Common myeloid progenitor, CD34-positive (primary cell): ENCODE measurements at regions of chr17 and their contacts with region 1.

Region 1: GRCh38 chr17:7462474-7463371 is 16.7 kb downstream of the ZBTB4 start:
- DNase-seq: no peak
- H3K4me3 ChIP-seq: no peak overlapping the region
- H3K27ac ChIP-seq: no peak overlapping the region
- H3K4me1 ChIP-seq: peaks cover 2 to 13% (median 11%) of the 10 kb centered on the region in 4 experiments
- H3K27me3 ChIP-seq: no peaks in the 10 kb centered on the region

Region 2: DNA sequence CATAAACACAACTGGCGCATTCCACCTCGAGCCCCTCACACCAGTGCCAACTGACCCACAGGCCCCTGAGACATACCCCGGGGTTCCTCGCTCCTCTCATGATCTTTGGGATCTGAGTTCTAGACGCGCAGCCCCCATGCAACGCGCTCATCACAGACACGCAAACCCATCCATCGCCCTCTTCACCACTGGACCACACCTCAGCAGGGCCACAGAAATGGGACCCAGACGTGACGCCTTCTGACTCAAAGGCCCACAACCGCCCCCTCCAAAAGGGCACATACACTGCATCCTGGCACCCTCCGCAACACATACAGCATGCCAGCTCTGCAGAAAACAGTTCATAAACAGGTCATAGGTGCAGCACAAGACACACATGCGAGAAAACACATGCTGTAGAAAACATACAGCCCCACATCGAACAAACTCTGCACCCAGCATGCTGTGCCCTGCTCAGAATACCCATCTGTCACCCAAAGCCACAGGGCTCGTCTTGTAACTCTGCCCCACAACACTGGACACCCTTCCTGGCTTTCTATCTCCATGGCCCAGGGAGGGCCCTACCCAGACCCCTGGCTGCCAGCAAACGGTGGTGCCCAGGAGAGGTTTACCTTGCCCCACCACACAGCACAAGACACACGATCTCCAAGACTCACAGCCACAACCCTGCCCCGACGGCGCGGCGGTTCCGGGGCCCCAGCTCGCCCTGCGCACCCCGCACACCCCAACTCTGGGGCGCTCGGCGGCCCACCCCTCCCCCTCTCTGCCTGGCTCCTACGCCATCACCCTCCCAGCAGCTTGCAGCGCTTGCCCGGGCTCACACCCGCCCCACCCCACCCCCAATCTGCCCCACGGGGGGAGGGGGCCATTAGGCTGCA is 15.8 kb after region 1 on chr17:
- CTCF ChIA-PET with region 1: interaction called, 20 read pairs
- POLR2A ChIA-PET with region 1: interaction called, 12 read pairs
- DNase-seq: peak; percentile 31 to 76 (median 65)
- H3K4me3 ChIP-seq: peak overlapping the region; percentile 65 to 88 (median 79)
- H3K27ac ChIP-seq: peak overlapping the region; percentile 66 to 87
- H3K4me1 ChIP-seq: peaks cover 0 to 55% (median 51%) of the 10 kb centered on the region in 4 experiments
- H3K27me3 ChIP-seq: no peaks in the 10 kb centered on the region

Region 3: DNA sequence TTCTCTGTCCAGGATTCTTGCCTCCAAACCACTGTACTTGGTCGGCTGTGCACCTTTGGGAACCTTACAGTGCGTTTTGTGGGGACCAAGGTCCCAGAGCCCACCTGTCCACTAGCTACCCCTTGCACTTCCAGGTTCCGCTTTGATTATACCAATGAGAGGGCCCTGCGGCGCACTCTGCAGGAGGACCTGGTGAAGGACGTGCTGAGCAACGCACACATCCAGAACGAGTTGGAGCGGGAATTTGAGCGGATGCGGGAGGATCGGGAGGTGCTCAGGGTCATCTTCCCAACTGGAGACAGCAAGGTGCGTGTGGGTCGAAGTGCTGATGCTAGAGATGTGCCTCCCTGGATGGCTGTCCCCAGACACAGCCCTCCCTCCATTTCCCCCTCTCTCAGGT is 40.3 kb after region 1 on chr17:
- CTCF ChIA-PET with region 1: no interaction called
- POLR2A ChIA-PET with region 1: no interaction called
- DNase-seq: peak in 1 of 3 donors; percentile 40
- H3K4me3 ChIP-seq: no peak overlapping the region
- H3K27ac ChIP-seq: no peak overlapping the region
- H3K4me1 ChIP-seq: no peaks in the 10 kb centered on the region
- H3K27me3 ChIP-seq: no peaks in the 10 kb centered on the region